HepG2 (cell line): ENCODE measurements at regions of chr20 and their contacts with region 1.

Region 1: DNA sequence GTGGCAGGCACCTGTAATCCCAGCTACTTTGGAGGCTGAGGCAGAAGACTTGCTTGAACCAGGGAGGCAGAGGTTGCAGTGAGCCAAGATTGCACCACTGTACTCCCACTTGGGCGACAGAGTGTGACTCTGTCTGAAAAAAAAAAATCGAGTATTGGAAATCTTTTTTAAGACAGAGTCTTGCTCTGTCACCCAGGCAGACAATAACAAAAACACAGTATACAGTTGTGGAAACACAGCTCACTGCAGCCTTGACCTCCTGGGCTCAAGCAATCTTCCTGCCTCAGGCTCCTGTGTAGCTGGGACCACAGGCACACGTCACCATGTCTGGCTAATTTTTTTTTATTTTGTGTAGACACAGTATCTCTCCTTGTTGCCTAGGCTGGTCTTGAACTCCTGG is 15.0 kb downstream of the NANP start:
- DNase-seq: no peak
- ATAC-seq: peak; percentile 18; the same call in 1 of the 3 replicates
- H3K4me3 ChIP-seq: no peak overlapping the region
- H3K27ac ChIP-seq: no peak overlapping the region
- H3K4me1 ChIP-seq: peaks cover 25% of the 10 kb centered on the region
- H3K27me3 ChIP-seq: no peaks in the 10 kb centered on the region
- CTCF ChIP-seq: no peak
- EP300 ChIP-seq: no peak
- POLR2A ChIP-seq: no peak
- RAD21 ChIP-seq: no peak

Region 2: DNA sequence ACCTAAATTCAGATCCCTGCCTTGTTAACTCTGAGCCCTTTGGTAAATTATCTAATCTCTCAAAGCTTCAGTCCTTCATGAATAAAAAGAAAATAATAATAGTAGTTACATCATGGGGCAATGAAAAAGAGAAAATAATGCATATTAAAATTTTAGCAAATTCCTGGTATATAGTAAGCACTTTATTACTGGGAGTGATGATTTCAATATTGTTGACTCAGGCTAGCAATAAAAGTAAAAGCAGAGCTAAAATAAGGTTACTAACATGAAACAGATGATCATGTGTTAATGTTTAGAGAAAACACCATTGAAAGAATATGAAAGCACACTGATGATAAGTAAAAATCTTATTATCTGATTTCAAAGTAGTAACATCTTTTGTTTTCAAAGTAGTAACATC is 187.7 kb before region 1 on chr20:
- CTCF ChIA-PET with region 1: no interaction called
- POLR2A ChIA-PET with region 1: no interaction called
- in situ Hi-C with region 1: no loop called
- intact Hi-C with region 1: no loop called
- DNase-seq: no peak
- ATAC-seq: no peak
- H3K4me3 ChIP-seq: no peak overlapping the region
- H3K27ac ChIP-seq: no peak overlapping the region
- H3K4me1 ChIP-seq: no peaks in the 10 kb centered on the region
- H3K27me3 ChIP-seq: no peaks in the 10 kb centered on the region
- CTCF ChIP-seq: no peak
- EP300 ChIP-seq: no peak
- POLR2A ChIP-seq: no peak
- RAD21 ChIP-seq: no peak

Region 3: DNA sequence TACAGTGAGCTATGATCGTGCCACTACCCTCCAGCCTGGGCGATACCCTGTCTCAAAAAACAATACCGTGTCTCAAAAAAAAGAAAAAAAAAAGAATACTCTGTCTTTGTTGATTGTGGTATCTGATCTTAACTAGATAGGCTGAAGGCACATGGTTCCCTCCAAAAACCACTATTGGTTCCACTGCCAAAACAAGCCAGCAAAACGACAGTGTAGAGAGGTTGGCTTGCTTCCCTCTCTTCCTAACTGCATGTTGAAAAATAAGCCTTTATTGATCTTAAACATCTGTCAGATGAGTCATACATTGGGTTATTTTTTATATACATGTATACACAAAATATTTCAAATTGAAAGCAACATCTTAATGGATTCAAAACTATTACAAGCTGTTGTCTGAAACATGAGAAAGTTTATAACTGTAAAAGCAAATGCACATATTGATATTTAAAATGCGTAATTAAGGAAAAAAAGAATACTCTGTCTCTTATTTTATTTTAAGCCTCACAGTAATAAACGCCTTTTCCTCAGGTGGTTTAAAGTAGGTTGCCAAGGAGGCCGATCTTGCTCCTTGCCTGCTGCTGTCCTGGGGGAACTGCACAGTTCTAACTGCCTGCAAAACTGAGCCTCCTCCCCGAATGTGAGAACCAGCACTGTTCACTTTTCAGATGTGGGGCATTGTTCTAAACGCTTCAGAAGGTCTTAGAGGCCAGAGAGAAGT is 16.5 kb before region 1 on chr20:
- CTCF ChIA-PET with region 1: no interaction called
- POLR2A ChIA-PET with region 1: no interaction called
- in situ Hi-C with region 1: no loop called
- intact Hi-C with region 1: no loop called
- DNase-seq: no peak
- ATAC-seq: no peak
- H3K4me3 ChIP-seq: no peak overlapping the region
- H3K27ac ChIP-seq: no peak overlapping the region
- H3K4me1 ChIP-seq: peaks cover 7% of the 10 kb centered on the region; the same call in 1 of the 2 replicates
- H3K27me3 ChIP-seq: 0 out of 5 replicates have a peak, but pooled peaks cover 0 to 3% of the 10 kb centered on the region in 2 experiments
- CTCF ChIP-seq: no peak
- EP300 ChIP-seq: no peak
- POLR2A ChIP-seq: no peak
- RAD21 ChIP-seq: no peak

Region 4: DNA sequence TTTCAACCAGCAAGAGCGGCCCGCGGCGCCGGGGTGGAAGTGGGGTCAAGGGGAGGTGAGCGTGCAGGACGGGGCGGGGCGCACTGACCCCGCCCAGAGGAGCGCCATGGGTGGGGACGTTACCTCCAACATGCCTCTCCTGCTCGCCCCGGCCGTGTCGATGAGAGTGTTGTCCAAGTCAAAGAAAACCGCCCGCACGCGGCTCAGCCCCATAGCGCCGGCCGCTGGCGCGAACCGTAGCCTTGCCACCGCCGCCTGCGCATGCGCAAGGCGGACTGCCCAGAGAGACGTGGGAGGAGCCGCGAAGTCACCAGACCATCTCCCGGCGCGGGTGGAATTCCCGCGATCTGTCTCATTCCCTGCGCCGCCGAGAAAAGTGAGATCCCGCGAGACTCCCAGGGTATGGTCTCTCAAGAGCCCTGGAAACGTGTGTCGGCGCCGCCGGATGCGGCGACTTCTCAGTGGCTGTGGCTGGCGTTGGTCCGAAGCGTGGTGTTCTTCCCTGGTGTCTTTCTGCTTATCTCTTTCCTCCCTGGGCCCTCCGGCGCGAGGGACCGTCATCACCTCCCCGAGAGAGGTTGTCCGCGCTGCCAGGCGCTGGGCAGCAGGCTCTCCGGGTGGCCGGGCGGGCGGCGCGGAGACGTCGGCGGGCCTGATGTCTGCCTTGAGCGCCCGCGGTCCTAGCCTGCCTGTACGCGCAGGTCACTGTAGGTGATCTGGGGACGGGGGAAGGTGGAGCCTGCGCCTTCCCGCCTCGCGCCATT is 15.1 kb after region 1 on chr20 and contains the start of gene NANP:
- CTCF ChIA-PET with region 1: no interaction called
- POLR2A ChIA-PET with region 1: interaction called, 3 read pairs
- in situ Hi-C with region 1: no loop called
- intact Hi-C with region 1: loop called (anchors 1 kb)
- DNase-seq: peak; percentile 100
- ATAC-seq: peak; percentile 91
- H3K4me3 ChIP-seq: peak within 1 kb of the TSS; percentile 75 to 87 (median 80)
- H3K27ac ChIP-seq: peak within 1 kb of the TSS; percentile 96
- H3K4me1 ChIP-seq: peaks cover 51% of the 10 kb centered on the region
- H3K27me3 ChIP-seq: no peaks in the 10 kb centered on the region; a peak in 1 of 5 replicates
- CTCF ChIP-seq: peak; percentile 65
- EP300 ChIP-seq: peak in 1 of 2 experiments; percentile 30; a peak in 2 of 4 replicates
- POLR2A ChIP-seq: peak; percentile 97 to 98
- RAD21 ChIP-seq: peak; percentile 62
- total RNA-seq, gene NANP: 21.5 and 31.0 TPM in 2 replicates